ENCODE measurements at regions of chr16 and their contacts with region 1.

Region 1: GRCh38 chr16:57300387-57301125 is 16.1 kb upstream of the PLLP start:
- DNase-seq: peak; percentile 100
- H3K4me3 ChIP-seq: peak overlapping the region; percentile 71
- H3K27ac ChIP-seq: peak overlapping the region; percentile 84
- H3K4me1 ChIP-seq: peaks cover 22% of the 10 kb centered on the region
- CTCF ChIP-seq: peak; percentile 91

Region 2: GRCh38 chr16:56964243-56965148 is 336.1 kb before region 1 on chr16:
- CTCF ChIA-PET with region 1: no interaction called
- POLR2A ChIA-PET with region 1: no interaction called
- intact Hi-C with region 1: no loop called
- DNase-seq: peak; percentile 96
- H3K4me3 ChIP-seq: no peak overlapping the region
- H3K27ac ChIP-seq: peak overlapping the region; percentile 16
- H3K4me1 ChIP-seq: peaks cover 21% of the 10 kb centered on the region
- CTCF ChIP-seq: peak; percentile 100

Region 3: GRCh38 chr16:57084257-57084770 is 216.2 kb before region 1 on chr16:
- CTCF ChIA-PET with region 1: no interaction called
- POLR2A ChIA-PET with region 1: interaction called, 3 read pairs
- intact Hi-C with region 1: loop called (anchors 1 kb)
- DNase-seq: peak; percentile 88
- H3K4me3 ChIP-seq: no peak overlapping the region
- H3K27ac ChIP-seq: peak overlapping the region; percentile 83
- H3K4me1 ChIP-seq: peaks cover 57% of the 10 kb centered on the region
- CTCF ChIP-seq: peak; percentile 98

Region 4: GRCh38 chr16:57244767-57245471 is 55.6 kb before region 1 on chr16 and contains the start of gene ARL2BP:
- CTCF ChIA-PET with region 1: interaction called, 4 read pairs
- POLR2A ChIA-PET with region 1: interaction called, 3 read pairs
- intact Hi-C with region 1: loop called (anchors 1 kb)
- DNase-seq: peak; percentile 95
- H3K4me3 ChIP-seq: peak within 1 kb of the TSS; percentile 85
- H3K27ac ChIP-seq: peak within 1 kb of the TSS; percentile 60
- H3K4me1 ChIP-seq: peaks cover 31% of the 10 kb centered on the region
- CTCF ChIP-seq: peak; percentile 59; the same call in 1 of the 2 replicates
- total RNA-seq, gene ARL2BP: 25.4 and 26.6 TPM in 2 replicates

Region 5: DNA sequence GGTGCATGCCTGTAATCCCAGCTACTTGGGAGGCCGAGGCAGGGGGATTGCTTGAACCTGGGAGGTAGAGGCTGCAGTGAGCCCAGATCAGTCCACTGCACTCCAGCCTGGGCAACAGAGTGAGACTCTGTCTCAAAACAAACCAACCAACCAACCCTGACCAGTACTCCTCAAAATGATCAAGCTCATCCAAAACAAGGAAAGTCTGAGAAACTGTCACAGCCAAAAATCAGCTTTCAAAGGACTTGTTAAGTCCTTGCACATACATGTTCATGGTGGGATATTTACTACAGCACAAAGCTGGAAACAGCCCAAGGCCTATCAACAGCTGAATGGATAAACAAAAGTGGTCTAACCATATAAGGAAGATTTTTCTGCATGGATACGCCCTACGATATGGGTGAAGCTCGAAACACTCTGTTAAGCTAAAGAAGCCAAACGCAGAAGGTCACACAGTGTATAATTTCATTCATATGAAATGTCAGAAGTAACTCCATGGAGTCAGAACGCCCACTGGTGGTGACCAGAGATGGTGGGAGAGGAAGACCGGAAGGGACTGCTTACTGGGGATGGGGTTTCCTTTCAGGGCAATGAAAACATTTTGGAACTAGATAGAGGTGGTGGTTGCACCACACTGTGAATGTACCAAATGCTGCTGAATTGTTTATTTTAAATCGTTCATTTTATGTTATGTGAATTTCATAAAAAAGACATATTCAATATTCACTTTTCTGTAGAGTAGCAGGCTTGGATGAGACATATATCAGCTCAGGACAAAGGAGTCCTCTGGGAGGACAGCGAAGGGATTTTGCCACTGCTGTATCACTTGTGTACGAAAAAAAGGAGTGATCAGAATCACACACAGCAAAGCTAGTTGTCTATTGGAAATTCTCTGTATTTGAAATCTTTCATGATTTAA is 121.7 kb after region 1 on chr16:
- CTCF ChIA-PET with region 1: interaction called, 18 read pairs
- POLR2A ChIA-PET with region 1: interaction called, 5 read pairs
- intact Hi-C with region 1: loop called (anchors 1 kb)
- DNase-seq: peak; percentile 23
- H3K4me3 ChIP-seq: no peak overlapping the region
- H3K27ac ChIP-seq: no peak overlapping the region
- H3K4me1 ChIP-seq: peaks cover 10% of the 10 kb centered on the region
- CTCF ChIP-seq: peak; percentile 70

Region 6: GRCh38 chr16:57519796-57520360 is 219.3 kb after region 1 on chr16:
- CTCF ChIA-PET with region 1: no interaction called
- POLR2A ChIA-PET with region 1: interaction called, 3 read pairs
- intact Hi-C with region 1: loop called (anchors 1 kb)
- DNase-seq: peak; percentile 79
- H3K4me3 ChIP-seq: no peak overlapping the region
- H3K27ac ChIP-seq: no peak overlapping the region
- H3K4me1 ChIP-seq: peaks cover 21% of the 10 kb centered on the region
- CTCF ChIP-seq: peak; percentile 99